ENCODE measurements at regions of chr18 and their contacts with region 1.

Region 1: GRCh38 chr18:12990967-12991838 is at the start of gene CEP192:
- DNase-seq: peak; percentile 98
- ATAC-seq: peak; percentile 93
- H3K4me3 ChIP-seq: peak within 1 kb of the TSS; percentile 74 to 98
- H3K27ac ChIP-seq: peak within 1 kb of the TSS; percentile 83
- H3K4me1 ChIP-seq: peaks cover 12 to 24% of the 10 kb centered on the region in 2 experiments; a peak in 3 of 4 replicates
- H3K27me3 ChIP-seq: no peaks in the 10 kb centered on the region
- CTCF ChIP-seq: no peak
- POLR2A ChIP-seq: peak; percentile 33
- RAD21 ChIP-seq: no peak
- total RNA-seq, gene CEP192: 24.3 TPM

Region 2: DNA sequence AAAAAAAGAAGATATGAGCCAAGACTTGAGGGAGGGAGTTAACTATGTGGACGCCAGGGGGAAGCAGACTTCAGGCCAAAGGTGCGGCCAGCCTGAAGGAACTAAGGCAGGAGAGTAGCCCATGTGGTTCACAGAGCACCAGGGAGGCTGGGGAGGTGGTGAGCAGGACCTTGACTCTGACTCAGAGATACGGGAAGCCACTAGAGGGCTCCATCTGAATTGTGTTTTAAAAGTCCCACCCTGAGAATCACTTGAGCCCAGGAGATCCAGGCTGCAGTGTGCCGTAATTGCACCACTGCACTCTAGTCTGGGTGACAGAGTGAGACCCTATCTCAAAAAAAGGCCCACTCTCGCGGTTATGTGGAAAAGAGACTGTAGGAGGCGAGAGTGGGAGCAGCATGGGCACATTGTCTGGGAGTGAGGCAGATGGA is 12.3 kb after region 1 on chr18:
- CTCF ChIA-PET with region 1: interaction called, 3 read pairs
- POLR2A ChIA-PET with region 1: interaction called, 21 read pairs
- RAD21 ChIA-PET with region 1: no interaction called
- intact Hi-C with region 1: no loop called
- DNase-seq: peak; percentile 78
- ATAC-seq: peak; percentile 100
- H3K4me3 ChIP-seq: no peak overlapping the region
- H3K27ac ChIP-seq: no peak overlapping the region
- H3K4me1 ChIP-seq: no peaks in the 10 kb centered on the region
- H3K27me3 ChIP-seq: no peaks in the 10 kb centered on the region
- CTCF ChIP-seq: peak; percentile 41 to 63 (median 60)
- POLR2A ChIP-seq: no peak
- RAD21 ChIP-seq: peak; percentile 51

Region 3: GRCh38 chr18:13051950-13052349 is 60.7 kb after region 1 on chr18:
- CTCF ChIA-PET with region 1: no interaction called
- POLR2A ChIA-PET with region 1: no interaction called
- RAD21 ChIA-PET with region 1: no interaction called
- intact Hi-C with region 1: no loop called
- DNase-seq: no peak
- ATAC-seq: no peak
- H3K4me3 ChIP-seq: no peak overlapping the region
- H3K27ac ChIP-seq: no peak overlapping the region
- H3K4me1 ChIP-seq: no peaks in the 10 kb centered on the region
- H3K27me3 ChIP-seq: no peaks in the 10 kb centered on the region
- CTCF ChIP-seq: no peak
- POLR2A ChIP-seq: no peak
- RAD21 ChIP-seq: no peak